Activated CD4-positive, alpha-beta memory T cell treated with anti-CD3 and anti-CD28 coated beads for 36 hours (primary cell): ENCODE measurements at regions of chr16 and their contacts with region 1.

Region 1: GRCh38 chr16:47141773-47142485 is 1.8 kb downstream of the NETO2 start:
- DNase-seq: peak; percentile 92
- H3K4me3 Mint-ChIP-seq: peak overlapping the region; percentile 78
- H3K27ac Mint-ChIP-seq: peak overlapping the region; percentile 49
- H3K4me1 Mint-ChIP-seq: peaks cover 52% of the 10 kb centered on the region
- H3K27me3 Mint-ChIP-seq: peaks cover 6% of the 10 kb centered on the region

Region 2: DNA sequence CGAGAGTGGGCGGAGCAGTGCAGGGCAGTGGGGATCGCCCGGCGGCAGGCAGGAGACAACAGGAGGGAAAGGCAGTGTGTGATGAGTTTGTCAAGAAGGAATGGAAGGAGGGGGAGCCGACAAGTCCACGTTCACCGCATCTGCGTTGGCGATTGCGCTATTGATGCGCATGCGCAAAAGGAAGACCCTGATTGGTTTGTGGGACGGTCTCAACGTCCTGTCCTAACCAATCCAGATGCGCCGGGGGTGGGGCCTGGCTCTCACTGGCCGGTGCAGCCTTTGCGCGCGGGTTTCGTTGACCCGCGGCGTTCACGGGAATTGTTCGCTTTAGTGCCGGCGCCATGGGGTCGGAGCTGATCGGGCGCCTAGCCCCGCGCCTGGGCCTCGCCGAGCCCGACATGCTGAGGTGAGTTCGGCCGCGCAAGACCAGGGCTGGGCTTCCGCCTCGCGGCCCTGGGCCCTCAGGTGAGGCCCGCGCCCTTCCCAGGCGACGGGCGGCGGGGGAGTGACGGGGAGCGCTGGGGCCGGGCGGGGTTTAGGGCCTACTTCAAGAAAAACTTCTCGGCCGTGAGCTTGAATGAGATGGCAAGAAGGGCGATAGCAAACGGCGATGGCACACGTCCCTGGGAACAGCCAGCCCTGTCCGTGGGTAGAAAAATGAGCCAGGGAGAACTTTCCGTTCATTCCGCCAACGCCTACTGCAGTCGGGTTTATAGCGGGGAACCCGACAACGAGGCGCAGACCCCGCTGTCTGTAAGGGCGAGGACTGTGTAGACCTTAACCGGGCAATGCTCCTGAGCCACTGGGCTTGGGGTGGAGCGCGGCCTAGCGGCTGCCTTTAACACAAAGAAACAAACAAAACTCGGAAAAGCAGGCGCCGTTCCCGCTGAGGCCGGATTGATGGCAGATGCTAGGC is 452.3 kb before region 1 on chr16 and contains the start of gene ORC6:
- CTCF ChIA-PET with region 1: interaction called, 3 read pairs
- POLR2A ChIA-PET with region 1: interaction called, 4 read pairs
- intact Hi-C with region 1: loop called (anchors 5 kb)
- DNase-seq: peak; percentile 98
- H3K4me3 Mint-ChIP-seq: no peak within 1 kb of the TSS
- H3K27ac Mint-ChIP-seq: no peak within 1 kb of the TSS
- H3K4me1 Mint-ChIP-seq: peaks cover 42% of the 10 kb centered on the region
- H3K27me3 Mint-ChIP-seq: no peaks in the 10 kb centered on the region
- total RNA-seq, gene ORC6: 48.6 to 51.7 TPM

Region 3: DNA sequence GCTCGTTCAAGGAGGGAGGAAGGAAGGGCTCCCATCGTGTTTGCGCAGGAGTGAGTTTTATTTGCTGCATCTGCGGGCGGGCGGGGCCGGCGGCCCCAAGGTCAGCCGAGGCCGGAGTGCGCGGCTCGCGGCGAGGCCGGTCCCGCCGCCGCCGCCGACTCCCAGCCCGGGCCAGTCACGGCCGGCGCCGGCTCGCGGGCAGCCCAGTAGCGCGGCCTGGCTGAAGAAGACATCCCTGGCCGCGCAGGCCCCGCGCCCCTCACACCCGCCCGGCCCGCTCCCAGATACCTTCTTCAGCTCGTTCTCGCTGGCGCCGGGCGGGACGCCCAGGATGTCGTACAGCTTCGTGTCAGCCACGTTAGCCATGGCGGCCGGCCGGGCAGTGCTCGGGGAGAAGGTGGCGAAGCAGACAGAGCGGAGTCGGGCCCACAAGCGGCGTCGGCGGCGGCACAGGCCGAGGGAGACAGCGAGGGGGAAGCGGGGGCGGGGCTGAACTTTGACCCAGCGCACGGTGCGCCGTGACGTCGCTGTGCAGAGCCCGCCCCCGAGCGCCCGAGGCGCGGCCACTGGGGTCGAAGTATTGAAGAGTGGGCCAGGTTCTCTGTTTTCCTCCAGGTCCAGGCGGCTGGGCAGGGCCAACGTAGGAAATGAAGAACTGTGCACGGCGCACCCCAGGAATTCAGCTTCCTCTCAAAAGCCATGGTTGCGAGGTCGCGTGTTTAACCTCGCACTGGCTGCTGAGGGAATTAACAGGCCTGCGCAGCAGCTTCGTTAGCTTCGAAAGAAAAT is 168.5 kb before region 1 on chr16 and contains the start of gene DNAJA2:
- CTCF ChIA-PET with region 1: interaction called, 47 read pairs
- POLR2A ChIA-PET with region 1: interaction called, 22 read pairs
- intact Hi-C with region 1: loop called (anchors 1 kb)
- DNase-seq: peak; percentile 94
- H3K4me3 Mint-ChIP-seq: peak within 1 kb of the TSS; percentile 98
- H3K27ac Mint-ChIP-seq: peak within 1 kb of the TSS; percentile 98
- H3K4me1 Mint-ChIP-seq: peaks cover 59% of the 10 kb centered on the region
- H3K27me3 Mint-ChIP-seq: no peaks in the 10 kb centered on the region
- total RNA-seq, gene DNAJA2: 78.9 to 80.6 TPM

Region 4: GRCh38 chr16:47046726-47047523 is 95.0 kb before region 1 on chr16:
- CTCF ChIA-PET with region 1: interaction called, 10 read pairs
- POLR2A ChIA-PET with region 1: no interaction called
- intact Hi-C with region 1: no loop called
- DNase-seq: no peak
- H3K4me3 Mint-ChIP-seq: no peak overlapping the region
- H3K27ac Mint-ChIP-seq: no peak overlapping the region
- H3K4me1 Mint-ChIP-seq: peaks cover 11% of the 10 kb centered on the region
- H3K27me3 Mint-ChIP-seq: no peaks in the 10 kb centered on the region

Region 5: GRCh38 chr16:47284999-47285398 is 143.1 kb after region 1 on chr16:
- CTCF ChIA-PET with region 1: no interaction called
- POLR2A ChIA-PET with region 1: no interaction called
- intact Hi-C with region 1: no loop called
- DNase-seq: no peak
- H3K4me3 Mint-ChIP-seq: no peak overlapping the region
- H3K27ac Mint-ChIP-seq: no peak overlapping the region
- H3K4me1 Mint-ChIP-seq: no peaks in the 10 kb centered on the region
- H3K27me3 Mint-ChIP-seq: no peaks in the 10 kb centered on the region

Region 6: DNA sequence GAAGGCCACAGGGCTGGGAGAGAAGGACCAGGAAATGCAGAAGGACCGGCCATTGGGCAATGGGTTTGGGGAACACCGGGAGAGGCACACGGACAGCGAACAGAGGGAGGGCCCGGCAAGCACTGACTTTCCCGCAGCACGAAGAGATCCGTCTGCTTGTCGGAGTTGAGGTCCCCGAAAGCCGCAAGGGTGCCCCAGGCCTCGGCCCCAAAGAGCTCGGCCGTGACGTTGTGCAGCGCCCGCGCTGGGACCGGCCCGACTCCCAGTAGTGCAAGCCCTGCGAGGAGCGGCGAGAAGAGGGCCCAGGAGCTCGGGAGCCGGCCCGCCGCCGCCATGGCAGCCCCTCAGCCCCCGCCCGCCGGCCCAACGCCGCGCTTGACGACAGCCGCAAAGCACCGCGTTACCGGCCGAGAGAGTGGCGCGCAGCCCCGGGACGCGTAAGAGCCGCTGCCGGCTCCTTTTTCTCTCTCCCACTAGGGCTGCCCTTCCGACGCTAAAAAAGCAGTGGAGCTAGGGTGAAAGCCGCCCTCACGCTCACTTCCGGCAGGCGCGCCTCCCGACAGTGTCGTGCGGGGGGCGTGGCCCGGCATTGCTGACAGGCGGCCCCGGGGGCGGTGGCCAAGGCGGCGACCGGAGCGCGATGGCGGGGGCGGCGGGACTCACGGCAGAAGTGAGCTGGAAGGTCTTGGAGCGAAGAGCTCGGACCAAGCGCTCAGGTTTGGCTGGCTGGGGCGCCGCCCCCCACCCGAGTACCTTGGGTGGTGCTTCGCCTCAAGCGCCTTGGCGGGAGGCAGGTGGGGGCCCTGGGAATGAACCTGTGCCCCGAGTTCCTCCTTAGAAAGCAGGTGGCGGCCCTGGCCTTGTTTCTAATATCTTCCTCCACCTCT is 319.0 kb after region 1 on chr16 and contains the starts of genes ITFG1 and PHKB:
- CTCF ChIA-PET with region 1: interaction called, 36 read pairs
- POLR2A ChIA-PET with region 1: interaction called, 5 read pairs
- intact Hi-C with region 1: loop called (anchors 1 kb)
- DNase-seq: peak; percentile 96
- H3K4me3 Mint-ChIP-seq: peak within 1 kb of the TSS; percentile 93
- H3K27ac Mint-ChIP-seq: peak within 1 kb of the TSS; percentile 95
- H3K4me1 Mint-ChIP-seq: peaks cover 53% of the 10 kb centered on the region
- H3K27me3 Mint-ChIP-seq: no peaks in the 10 kb centered on the region
- total RNA-seq, gene ITFG1: 20.6 to 22.0 TPM
- total RNA-seq, gene PHKB: 27.6 to 28.8 TPM

Region 7: DNA sequence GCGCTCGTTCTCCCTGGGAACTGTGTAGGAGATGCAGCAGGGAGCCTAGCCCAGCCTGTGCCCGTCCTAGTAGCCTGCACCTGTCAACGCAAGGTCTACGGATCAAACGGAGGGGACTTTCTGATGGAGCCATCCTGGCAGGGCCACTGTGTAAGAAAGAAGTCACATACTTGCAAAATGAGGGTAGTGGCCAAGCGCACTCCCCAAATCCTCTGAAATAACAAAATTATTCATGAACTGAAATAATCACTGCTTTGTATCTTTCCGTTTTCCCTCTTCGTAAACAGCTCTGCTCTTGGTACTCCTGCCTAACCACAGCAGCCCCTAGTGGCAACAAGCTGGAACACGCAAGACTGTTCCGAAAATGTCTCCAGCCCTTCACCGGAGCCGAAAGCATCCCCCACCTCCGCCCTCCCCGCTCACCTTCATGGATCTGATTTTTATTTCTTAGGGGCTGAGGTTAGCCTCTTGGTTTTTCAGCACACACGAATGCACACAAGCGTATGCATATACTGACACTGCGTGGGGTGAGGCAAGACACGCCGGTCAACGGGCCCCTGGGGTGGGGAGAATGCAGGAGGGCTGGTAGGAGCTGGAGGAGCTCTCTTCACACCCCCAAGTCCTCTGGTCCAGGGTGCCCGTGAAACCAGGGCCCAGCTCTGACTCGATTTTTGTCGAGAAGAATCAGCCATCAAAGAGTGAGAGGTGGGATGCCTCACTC is 913.1 kb after region 1 on chr16:
- CTCF ChIA-PET with region 1: interaction called, 9 read pairs
- POLR2A ChIA-PET with region 1: no interaction called
- intact Hi-C with region 1: loop called (anchors 1 kb)
- DNase-seq: peak; percentile 44
- H3K4me3 Mint-ChIP-seq: no peak overlapping the region
- H3K27ac Mint-ChIP-seq: no peak overlapping the region
- H3K4me1 Mint-ChIP-seq: no peaks in the 10 kb centered on the region
- H3K27me3 Mint-ChIP-seq: peaks cover 24% of the 10 kb centered on the region

Region 8: GRCh38 chr16:48156790-48157209 is 1014.9 kb after region 1 on chr16:
- CTCF ChIA-PET with region 1: interaction called, 69 read pairs
- POLR2A ChIA-PET with region 1: interaction called, 4 read pairs
- intact Hi-C with region 1: loop called (anchors 1 kb)
- DNase-seq: peak; percentile 89
- H3K4me3 Mint-ChIP-seq: no peak overlapping the region
- H3K27ac Mint-ChIP-seq: no peak overlapping the region
- H3K4me1 Mint-ChIP-seq: peaks cover 26% of the 10 kb centered on the region
- H3K27me3 Mint-ChIP-seq: peaks cover 18% of the 10 kb centered on the region